Activated CD4-positive, alpha-beta T cell treated with anti-CD3 and anti-CD28 coated beads for 36 hours (primary cell): ENCODE measurements at regions of chr3 and their contacts with region 1.

Region 1: DNA sequence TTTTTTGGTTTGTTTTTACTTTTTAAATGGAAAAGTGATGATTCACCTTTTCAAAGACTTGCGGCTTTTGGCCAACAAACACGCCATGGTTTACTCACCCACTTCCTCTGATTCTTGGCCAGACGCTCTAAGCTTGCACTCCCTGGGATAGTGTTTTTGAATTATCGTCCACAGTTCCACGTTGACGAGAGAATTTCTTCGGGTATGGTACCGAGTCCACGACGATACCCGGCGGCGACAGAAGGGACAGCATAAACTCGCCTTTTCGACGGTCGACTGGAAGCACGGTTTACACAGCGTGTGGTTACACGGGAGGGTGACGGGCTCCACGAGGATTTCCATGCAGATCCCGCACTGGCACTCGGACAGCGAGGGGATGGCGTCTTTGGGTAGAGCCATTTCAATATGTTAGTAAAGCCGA is 783 bp downstream of the RNF168 start:
- DNase-seq: peak; percentile 77
- ATAC-seq: peak; percentile 39
- H3K4me3 Mint-ChIP-seq: peak overlapping the region; percentile 96
- H3K27ac Mint-ChIP-seq: peak overlapping the region; percentile 97
- H3K4me1 Mint-ChIP-seq: peaks cover 27% of the 10 kb centered on the region
- H3K27me3 Mint-ChIP-seq: no peaks in the 10 kb centered on the region

Region 2: GRCh38 chr3:196081791-196082618 is 420.8 kb before region 1 on chr3 and contains the start of gene TFRC:
- CTCF ChIA-PET with region 1: no interaction called
- POLR2A ChIA-PET with region 1: no interaction called
- intact Hi-C with region 1: loop called in 1 of 2 experiments (anchors 1 kb)
- DNase-seq: peak; percentile 98
- ATAC-seq: peak; percentile 92
- H3K4me3 Mint-ChIP-seq: peak within 1 kb of the TSS; percentile 95
- H3K27ac Mint-ChIP-seq: peak within 1 kb of the TSS; percentile 93
- H3K4me1 Mint-ChIP-seq: peaks cover 30% of the 10 kb centered on the region
- H3K27me3 Mint-ChIP-seq: no peaks in the 10 kb centered on the region
- total RNA-seq, gene TFRC: 373 to 520 TPM

Region 3: GRCh38 chr3:196432137-196432879 is 70.5 kb before region 1 on chr3 and contains the start of gene UBXN7:
- CTCF ChIA-PET with region 1: no interaction called
- POLR2A ChIA-PET with region 1: no interaction called
- intact Hi-C with region 1: loop called (anchors 1 to 2 kb)
- DNase-seq: peak; percentile 98
- ATAC-seq: peak; percentile 89
- H3K4me3 Mint-ChIP-seq: peak within 1 kb of the TSS; percentile 79
- H3K27ac Mint-ChIP-seq: peak within 1 kb of the TSS; percentile 95
- H3K4me1 Mint-ChIP-seq: peaks cover 20% of the 10 kb centered on the region
- H3K27me3 Mint-ChIP-seq: no peaks in the 10 kb centered on the region
- total RNA-seq, gene UBXN7: 67.2 to 102 TPM

Region 4: DNA sequence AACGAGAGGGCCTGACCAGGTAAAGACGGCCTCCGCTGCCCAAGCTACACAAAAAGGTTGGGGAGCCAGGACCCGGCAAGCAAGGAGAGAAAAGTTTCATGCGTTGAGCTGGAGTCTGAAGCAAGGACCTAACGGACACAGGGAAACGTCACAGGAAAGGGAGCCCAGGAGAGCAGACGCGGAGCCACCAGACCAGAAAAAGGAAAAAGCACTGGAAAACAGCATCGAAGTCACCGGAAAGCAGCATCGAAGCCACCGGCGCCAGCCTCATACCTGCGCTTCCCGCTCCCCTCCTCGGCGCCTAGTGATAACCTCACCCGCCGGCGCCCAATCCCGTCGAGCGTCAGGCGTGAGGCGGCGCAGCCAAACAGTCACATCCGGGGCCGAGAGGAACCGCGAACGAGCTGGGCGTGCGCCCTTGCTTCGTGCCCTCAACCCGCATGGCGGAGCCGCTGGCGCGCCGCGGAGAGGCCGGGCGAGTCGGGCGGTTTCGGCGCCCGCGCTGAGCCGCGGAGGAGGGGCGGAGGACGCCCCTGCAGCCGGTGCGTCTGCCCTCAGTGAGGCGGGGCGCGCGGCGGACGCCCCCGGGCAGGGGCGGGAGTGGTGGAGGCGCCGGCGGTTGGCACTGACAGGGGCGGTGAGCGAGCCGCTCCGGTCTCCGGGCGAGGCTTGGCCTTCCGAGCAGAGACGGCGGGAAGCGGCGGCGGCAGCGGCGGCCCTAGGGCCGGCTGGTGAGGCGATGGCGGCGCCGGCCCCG is 65.6 kb after region 1 on chr3 and contains the starts of genes FBXO45 and WDR53:
- CTCF ChIA-PET with region 1: no interaction called
- POLR2A ChIA-PET with region 1: no interaction called
- intact Hi-C with region 1: loop called in 1 of 2 experiments (anchors 1 kb)
- DNase-seq: peak; percentile 98
- ATAC-seq: peak; percentile 93
- H3K4me3 Mint-ChIP-seq: peak within 1 kb of the TSS; percentile 88
- H3K27ac Mint-ChIP-seq: peak within 1 kb of the TSS; percentile 93
- H3K4me1 Mint-ChIP-seq: peaks cover 45% of the 10 kb centered on the region
- H3K27me3 Mint-ChIP-seq: no peaks in the 10 kb centered on the region
- total RNA-seq, gene FBXO45: 12.7 to 16.2 TPM
- total RNA-seq, gene WDR53: 12.8 to 21.4 TPM

Region 5: GRCh38 chr3:196711838-196712513 is 209.2 kb after region 1 on chr3 and contains the starts of genes CEP19 and PIGX:
- CTCF ChIA-PET with region 1: no interaction called
- POLR2A ChIA-PET with region 1: no interaction called
- intact Hi-C with region 1: loop called in 1 of 2 experiments (anchors 1 kb)
- DNase-seq: peak; percentile 94
- ATAC-seq: peak; percentile 87
- H3K4me3 Mint-ChIP-seq: peak within 1 kb of the TSS; percentile 83
- H3K27ac Mint-ChIP-seq: peak within 1 kb of the TSS; percentile 96
- H3K4me1 Mint-ChIP-seq: peaks cover 33% of the 10 kb centered on the region
- H3K27me3 Mint-ChIP-seq: no peaks in the 10 kb centered on the region
- total RNA-seq, gene CEP19: 4.7 to 5.6 TPM
- total RNA-seq, gene PIGX: 37.8 to 42.2 TPM

Region 6: GRCh38 chr3:196942226-196942914 is 439.6 kb after region 1 on chr3 and contains the start of gene NCBP2:
- CTCF ChIA-PET with region 1: no interaction called
- POLR2A ChIA-PET with region 1: no interaction called
- intact Hi-C with region 1: loop called in 1 of 2 experiments (anchors 1 kb)
- DNase-seq: peak; percentile 100
- ATAC-seq: peak; percentile 97
- H3K4me3 Mint-ChIP-seq: peak within 1 kb of the TSS; percentile 93
- H3K27ac Mint-ChIP-seq: peak within 1 kb of the TSS; percentile 99
- H3K4me1 Mint-ChIP-seq: peaks cover 45% of the 10 kb centered on the region
- H3K27me3 Mint-ChIP-seq: no peaks in the 10 kb centered on the region
- total RNA-seq, gene NCBP2: 94.8 to 107 TPM